ENCODE measurements at regions of chr19 and their contacts with region 1.

Region 1: GRCh38 chr19:42401365-42402303 is 11.5 kb upstream of the CNFN start:
- DNase-seq: peak; percentile 90
- H3K4me3 ChIP-seq: peak overlapping the region; percentile 44 to 59
- H3K27ac ChIP-seq: peak overlapping the region in 1 of 2 experiments; percentile 63; a peak in 2 of 4 replicates
- H3K4me1 ChIP-seq: peaks cover 0 to 20% of the 10 kb centered on the region in 2 experiments; a peak in 1 of 4 replicates
- H3K27me3 ChIP-seq: no peaks in the 10 kb centered on the region
- CTCF ChIP-seq: peak; percentile 88
- EP300 ChIP-seq: no peak
- RAD21 ChIP-seq: peak; percentile 57

Region 2: GRCh38 chr19:42378225-42379215 is 23.1 kb before region 1 on chr19:
- CTCF ChIA-PET with region 1: interaction called, 45 read pairs
- POLR2A ChIA-PET with region 1: interaction called, 8 read pairs
- DNase-seq: no peak
- H3K4me3 ChIP-seq: no peak overlapping the region
- H3K27ac ChIP-seq: no peak overlapping the region
- H3K4me1 ChIP-seq: no peaks in the 10 kb centered on the region
- H3K27me3 ChIP-seq: peaks cover 23% of the 10 kb centered on the region; the same call in 1 of the 2 replicates
- CTCF ChIP-seq: no peak
- EP300 ChIP-seq: no peak
- RAD21 ChIP-seq: no peak

Region 3: GRCh38 chr19:42386974-42387707 is 14.5 kb before region 1 on chr19:
- CTCF ChIA-PET with region 1: interaction called, 45 read pairs
- POLR2A ChIA-PET with region 1: interaction called, 3 read pairs
- DNase-seq: peak; percentile 91
- H3K4me3 ChIP-seq: peak overlapping the region; percentile 47 to 60
- H3K27ac ChIP-seq: no peak overlapping the region; a peak in 1 of 4 replicates
- H3K4me1 ChIP-seq: no peaks in the 10 kb centered on the region; a peak in 1 of 4 replicates
- H3K27me3 ChIP-seq: no peaks in the 10 kb centered on the region; the same call in none of the 2 replicates
- CTCF ChIP-seq: peak; percentile 51
- EP300 ChIP-seq: no peak
- RAD21 ChIP-seq: peak; percentile 45; the same call in 1 of the 2 replicates

Region 4: GRCh38 chr19:42412227-42412626 is 10.6 kb after region 1 on chr19:
- CTCF ChIA-PET with region 1: interaction called, 33 read pairs
- POLR2A ChIA-PET with region 1: interaction called, 6 read pairs
- DNase-seq: peak; percentile 70
- H3K4me3 ChIP-seq: no peak overlapping the region
- H3K27ac ChIP-seq: peak overlapping the region in 1 of 2 experiments; percentile 9; a peak in 1 of 4 replicates
- H3K4me1 ChIP-seq: peaks cover 0 to 20% of the 10 kb centered on the region in 2 experiments; a peak in 1 of 4 replicates
- H3K27me3 ChIP-seq: no peaks in the 10 kb centered on the region
- CTCF ChIP-seq: no peak
- EP300 ChIP-seq: no peak
- RAD21 ChIP-seq: no peak

Region 5: GRCh38 chr19:42529248-42529764 is 127.7 kb after region 1 on chr19:
- CTCF ChIA-PET with region 1: no interaction called
- POLR2A ChIA-PET with region 1: no interaction called
- DNase-seq: peak; percentile 77
- H3K4me3 ChIP-seq: no peak overlapping the region; a peak in 1 of 4 replicates
- H3K27ac ChIP-seq: no peak overlapping the region
- H3K4me1 ChIP-seq: no peaks in the 10 kb centered on the region; a peak in 1 of 4 replicates
- H3K27me3 ChIP-seq: no peaks in the 10 kb centered on the region
- CTCF ChIP-seq: peak; percentile 86
- EP300 ChIP-seq: no peak
- RAD21 ChIP-seq: peak; percentile 79